ENCODE measurements at regions of chr5 and their contacts with region 1.

Region 1: DNA sequence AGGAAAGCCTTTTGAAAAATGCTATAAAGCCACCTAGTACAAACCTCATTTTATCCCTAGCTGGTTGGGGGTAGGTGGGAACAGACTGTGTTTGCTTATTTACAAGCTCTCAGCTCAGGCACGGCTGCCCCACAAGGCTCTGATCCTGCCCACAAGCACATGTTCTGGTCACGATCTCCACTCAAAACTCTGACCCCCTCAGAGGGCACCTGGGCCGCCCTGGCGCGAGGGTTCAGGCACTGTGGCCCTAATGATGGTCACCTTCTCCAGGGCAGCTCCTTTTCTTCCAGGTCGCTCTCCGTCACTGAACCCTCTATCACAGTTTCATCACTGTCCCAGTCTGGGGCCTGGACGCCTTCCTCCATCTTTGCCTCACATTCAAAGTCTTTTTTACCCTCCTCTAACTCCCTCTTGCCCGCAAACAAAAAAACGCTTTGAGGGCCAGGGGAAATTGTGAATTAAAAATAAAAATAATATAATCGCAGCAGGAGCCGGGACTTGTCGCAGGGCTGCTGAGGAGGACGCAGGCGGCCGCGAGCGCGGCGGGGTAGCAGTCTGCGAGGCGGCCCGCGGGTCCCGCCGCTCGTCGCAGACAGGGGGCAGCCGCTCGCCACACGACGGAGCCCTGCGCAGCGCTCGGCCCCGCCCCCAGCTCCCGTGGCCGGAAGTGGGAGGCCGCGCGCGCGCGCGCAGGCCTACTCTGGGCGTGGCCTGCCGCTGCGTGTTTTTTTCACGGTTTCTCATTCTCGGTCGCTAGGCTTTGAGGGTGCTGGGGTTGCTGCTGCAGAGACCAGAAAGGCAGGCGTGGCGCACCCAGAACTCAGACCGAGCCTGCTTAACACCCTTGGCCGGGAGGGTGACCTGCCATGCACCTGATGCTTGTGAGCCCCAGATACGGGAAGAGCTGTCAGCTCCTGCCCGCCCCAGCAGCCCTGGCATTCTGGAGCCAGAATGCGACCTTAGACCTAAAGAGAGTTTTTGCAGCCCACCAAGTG is at the start of gene ANKRD31:
- DNase-seq: peak; percentile 67 to 93 (median 86)

Region 2: DNA sequence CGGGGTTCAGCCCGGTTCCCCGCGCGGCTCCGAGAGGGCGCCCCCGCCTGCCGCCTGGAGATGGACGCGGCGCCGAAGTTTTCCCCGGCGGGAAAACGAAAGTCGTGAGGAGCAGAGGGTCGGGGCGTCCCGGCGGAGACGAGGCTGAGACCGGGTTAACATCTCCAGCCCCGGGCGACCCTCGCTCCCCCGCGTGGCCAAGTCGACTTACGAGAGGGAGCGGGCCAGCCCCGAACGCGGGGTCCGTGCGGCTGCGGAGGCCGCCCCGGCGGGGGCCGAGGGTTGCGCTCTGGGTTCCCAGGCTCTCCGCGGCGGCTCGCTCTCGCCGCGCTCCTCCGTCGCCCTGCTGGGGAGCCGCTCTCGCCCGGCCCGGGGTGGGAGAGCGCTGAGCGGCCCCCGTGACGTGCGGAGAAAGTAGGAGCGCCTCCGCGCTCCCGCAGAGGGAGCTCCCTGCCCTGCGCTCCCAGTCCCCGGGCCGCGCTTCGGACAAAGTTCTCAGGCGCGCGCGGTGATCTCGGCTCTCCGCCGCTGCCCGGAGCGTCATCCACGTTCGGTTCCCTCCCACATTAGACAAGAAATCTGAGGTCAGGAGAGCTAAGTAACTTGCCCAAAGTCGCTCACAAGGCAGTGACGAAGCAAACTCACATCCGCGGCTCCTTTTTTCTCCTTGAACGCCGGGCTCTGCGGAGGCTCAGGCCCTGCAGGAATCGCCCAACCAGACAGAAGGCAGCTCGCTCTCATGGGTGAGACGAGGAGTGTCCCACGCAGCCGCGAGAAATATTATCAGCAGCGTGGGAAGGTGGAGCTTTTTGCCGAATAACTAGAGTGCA is 183.1 kb before region 1 on chr5:
- intact Hi-C with region 1: loop called (anchors 10 kb)
- DNase-seq: peak in 41 of 42 donors; percentile 30 to 84 (median 61)

Region 3: GRCh38 chr5:75072066-75072465 is 164.6 kb before region 1 on chr5:
- intact Hi-C with region 1: no loop called
- DNase-seq: no peak

Region 4: GRCh38 chr5:75142566-75143136 is 94.0 kb before region 1 on chr5:
- intact Hi-C with region 1: no loop called
- DNase-seq: no peak

Region 5: GRCh38 chr5:75331095-75332090 is 94.8 kb after region 1 on chr5:
- intact Hi-C with region 1: loop called (anchors 5 kb)
- DNase-seq: no peak

Region 6: GRCh38 chr5:75584641-75585040 is 348.0 kb after region 1 on chr5:
- intact Hi-C with region 1: no loop called
- DNase-seq: no peak

Region 7: GRCh38 chr5:75670577-75670976 is 434.0 kb after region 1 on chr5:
- intact Hi-C with region 1: loop called (anchors 10 kb)
- DNase-seq: no peak

Measured in head of caudate nucleus (tissue), 42 donors.